ENCODE measurements at regions of chr4 and their contacts with region 1.

Region 1: GRCh38 chr4:76579610-76580375 is 144.8 kb downstream of the SHROOM3 start:
- DNase-seq: no peak

Region 2: GRCh38 chr4:76315267-76315918 is 264.4 kb before region 1 on chr4:
- intact Hi-C with region 1: no loop called
- DNase-seq: no peak

Region 3: DNA sequence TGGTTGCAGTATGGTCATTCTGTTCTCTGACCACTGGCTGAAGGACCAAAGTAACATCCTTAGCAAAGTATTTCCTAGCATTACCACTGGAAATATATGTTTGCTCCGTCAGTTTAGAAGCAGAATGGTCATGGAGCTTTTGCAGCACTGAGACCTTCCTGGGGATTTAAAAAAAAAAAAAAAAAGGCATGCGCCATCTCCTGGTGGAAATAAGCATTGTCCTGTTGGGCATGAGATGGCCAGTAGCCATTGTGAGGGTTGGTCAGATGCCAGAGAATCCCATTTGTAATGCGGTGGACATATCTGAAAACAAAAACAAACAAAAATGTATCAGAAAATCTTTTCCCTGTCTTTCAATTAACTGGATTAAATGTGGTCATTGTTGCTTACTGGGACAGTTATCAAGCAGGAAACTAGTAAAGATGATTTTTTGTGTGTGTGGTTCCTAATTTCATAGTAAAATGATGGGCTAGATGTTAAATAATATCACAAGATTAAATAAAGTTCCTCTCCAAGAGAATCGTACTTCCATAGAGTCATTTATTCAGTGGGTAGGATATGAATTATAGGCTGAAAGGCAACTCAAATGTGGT is 178.6 kb after region 1 on chr4:
- intact Hi-C with region 1: loop called (anchors 5 kb)
- DNase-seq: no peak

Region 4: GRCh38 chr4:76836860-76837562 is 257.2 kb after region 1 on chr4:
- intact Hi-C with region 1: no loop called
- DNase-seq: no peak

Region 5: DNA sequence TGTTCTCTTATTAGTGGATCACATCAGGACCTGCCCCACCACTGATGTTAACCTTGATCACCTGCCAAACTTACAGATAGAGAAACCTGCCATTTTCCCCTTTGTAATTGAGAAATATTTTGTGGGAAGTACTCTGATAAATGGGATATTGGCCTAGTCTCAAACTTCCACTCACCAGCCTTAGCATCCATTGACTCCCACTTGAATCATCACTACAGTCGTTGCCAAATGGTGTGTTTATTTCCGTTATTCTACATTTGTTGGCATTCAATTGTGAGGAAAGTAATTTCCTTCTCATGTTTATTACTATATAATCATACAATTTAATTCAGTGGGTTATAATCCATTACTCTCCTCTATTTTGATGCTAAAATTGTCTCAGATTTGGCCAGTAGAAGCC is 869.4 kb after region 1 on chr4:
- intact Hi-C with region 1: no loop called
- DNase-seq: no peak

Measured in cardiac septum (tissue), 1 donor.